Natural killer cell (primary cell): ENCODE measurements at regions of chr9 and their contacts with region 1.

Region 1: DNA sequence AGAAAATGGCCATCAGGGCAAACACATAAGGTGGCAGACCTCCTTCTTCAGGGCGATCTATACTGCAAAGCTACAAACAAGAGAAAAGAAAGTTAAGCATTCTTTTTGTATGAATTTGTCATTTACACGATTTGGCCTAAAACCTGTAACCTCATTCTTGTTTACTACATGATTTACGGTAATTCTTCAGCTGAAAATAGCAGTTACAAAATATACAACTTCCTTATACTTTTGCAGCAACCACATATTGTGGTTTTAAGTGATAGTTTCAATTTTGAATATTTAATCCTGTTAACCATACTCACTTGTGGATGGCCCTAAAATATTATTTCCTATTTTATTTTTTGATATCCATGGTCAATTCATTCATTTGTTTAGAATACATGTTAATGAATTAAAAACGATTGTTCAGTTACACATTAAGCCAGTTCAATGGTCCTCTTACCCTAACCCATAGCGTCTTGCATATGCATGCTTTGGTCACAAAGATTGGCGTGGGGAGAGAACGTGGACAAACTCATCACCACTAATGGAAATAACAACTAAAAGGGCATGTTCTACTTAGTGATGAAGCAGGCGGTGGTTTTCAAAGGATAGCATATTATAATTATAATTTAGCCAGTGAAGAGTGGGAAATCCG is 16.6 kb downstream of the TUT7 start:
- DNase-seq: peak in 1 of 2 donors; percentile 52
- ATAC-seq: peak; percentile 75 to 90 (median 81)
- H3K4me3 ChIP-seq: peak overlapping the region; percentile 33
- H3K4me3 Mint-ChIP-seq: peak overlapping the region; percentile 88
- H3K27ac ChIP-seq: peak overlapping the region; percentile 90
- H3K27ac Mint-ChIP-seq: peak overlapping the region; percentile 94
- H3K4me1 ChIP-seq: peaks cover 13% of the 10 kb centered on the region
- H3K4me1 Mint-ChIP-seq: peaks cover 31 to 35% of the 10 kb centered on the region in 2 donors
- H3K27me3 ChIP-seq: no peaks in the 10 kb centered on the region
- H3K27me3 Mint-ChIP-seq: no peaks in the 10 kb centered on the region
- CTCF ChIP-seq: no peak

Region 2: DNA sequence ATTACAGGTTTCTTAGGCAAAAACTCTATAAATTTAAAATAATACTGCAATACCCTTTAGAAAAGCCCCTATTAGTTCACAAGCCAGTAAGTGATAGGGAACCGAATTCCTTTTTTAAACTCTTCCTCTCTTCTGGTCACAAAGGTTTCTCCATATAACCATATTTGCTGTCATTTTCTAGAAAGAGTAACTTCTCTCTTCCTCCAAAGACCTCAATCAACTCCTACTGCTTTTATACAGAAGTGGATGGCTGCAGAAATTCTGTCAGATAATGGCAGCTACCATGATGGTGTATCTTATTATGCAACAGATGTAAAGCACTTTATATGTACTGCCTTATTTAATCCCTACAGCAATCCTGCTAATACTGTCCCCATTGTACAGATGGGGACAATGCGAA is 10.4 kb after region 1 on chr9:
- intact Hi-C with region 1: loop called (anchors 1 kb)
- DNase-seq: no peak
- ATAC-seq: no peak
- H3K4me3 ChIP-seq: no peak overlapping the region
- H3K4me3 Mint-ChIP-seq: peak overlapping the region; percentile 64
- H3K27ac ChIP-seq: no peak overlapping the region
- H3K27ac Mint-ChIP-seq: peak overlapping the region; percentile 93 to 97
- H3K4me1 ChIP-seq: peaks cover 19% of the 10 kb centered on the region
- H3K4me1 Mint-ChIP-seq: peaks cover 66 to 67% of the 10 kb centered on the region in 2 donors
- H3K27me3 ChIP-seq: no peaks in the 10 kb centered on the region
- H3K27me3 Mint-ChIP-seq: no peaks in the 10 kb centered on the region
- CTCF ChIP-seq: no peak

Region 3: GRCh38 chr9:86354011-86354817 is 16.6 kb after region 1 on chr9 and contains the start of gene TUT7:
- intact Hi-C with region 1: loop called (anchors 1 kb)
- DNase-seq: peak; percentile 96 to 97
- ATAC-seq: peak; percentile 92 to 99 (median 96)
- H3K4me3 ChIP-seq: peak within 1 kb of the TSS; percentile 72
- H3K4me3 Mint-ChIP-seq: peak within 1 kb of the TSS; percentile 95
- H3K27ac ChIP-seq: peak within 1 kb of the TSS; percentile 82
- H3K27ac Mint-ChIP-seq: peak within 1 kb of the TSS; percentile 93 to 97
- H3K4me1 ChIP-seq: peaks cover 19% of the 10 kb centered on the region
- H3K4me1 Mint-ChIP-seq: peaks cover 40 to 45% of the 10 kb centered on the region in 2 donors
- H3K27me3 ChIP-seq: no peaks in the 10 kb centered on the region
- H3K27me3 Mint-ChIP-seq: no peaks in the 10 kb centered on the region
- CTCF ChIP-seq: no peak
- total RNA-seq, gene TUT7: 84.7 to 94.8 (median 85.6) TPM

Region 4: DNA sequence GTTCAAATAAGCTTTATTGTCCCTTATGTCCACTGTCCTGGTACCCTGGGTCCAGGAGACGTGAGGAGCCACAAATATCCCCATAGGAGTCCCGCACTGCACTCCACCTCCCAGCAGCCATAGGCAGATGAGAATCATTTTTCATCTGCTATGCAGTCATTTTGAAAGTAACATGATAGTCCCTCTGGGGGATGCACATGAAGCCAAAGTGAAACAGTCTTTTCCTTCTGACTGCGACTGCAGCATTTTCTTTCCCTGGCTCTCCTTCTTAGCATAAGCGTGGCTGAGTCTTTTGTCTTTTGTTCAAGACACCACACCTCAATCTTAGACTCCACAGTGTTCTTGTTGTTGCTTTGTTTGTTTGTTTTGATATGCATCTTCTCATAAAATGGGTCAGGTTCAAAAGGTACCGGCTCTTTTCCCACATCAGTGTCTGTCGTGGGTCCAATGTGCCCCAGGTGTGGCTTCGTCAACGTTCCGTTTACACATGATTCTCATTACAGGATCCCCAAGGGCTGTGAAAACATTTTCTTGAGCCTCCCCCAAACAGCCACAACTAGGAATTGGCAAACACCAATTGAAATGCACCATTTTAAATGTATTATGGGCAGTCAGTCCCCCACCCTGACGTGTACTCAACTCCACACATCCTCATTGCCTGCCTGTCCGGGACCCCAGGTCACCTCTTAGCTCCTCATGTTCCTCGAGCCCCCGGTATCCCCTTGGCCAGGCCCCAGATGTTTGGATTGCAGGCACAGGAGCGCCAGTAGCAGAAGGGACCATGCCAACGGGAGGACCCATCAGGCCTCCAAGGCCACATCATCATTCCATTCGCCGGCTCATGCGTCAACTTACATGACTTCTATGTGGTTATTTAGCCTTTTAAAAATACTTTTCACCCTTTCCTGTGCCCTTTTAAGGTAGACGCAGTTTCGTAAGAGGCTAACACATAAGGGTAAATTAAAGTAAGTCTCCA is 922.2 kb after region 1 on chr9:
- intact Hi-C with region 1: no loop called
- DNase-seq: no peak
- ATAC-seq: no peak
- H3K4me3 ChIP-seq: no peak overlapping the region
- H3K4me3 Mint-ChIP-seq: no peak overlapping the region
- H3K27ac ChIP-seq: no peak overlapping the region
- H3K27ac Mint-ChIP-seq: no peak overlapping the region
- H3K4me1 ChIP-seq: no peaks in the 10 kb centered on the region
- H3K4me1 Mint-ChIP-seq: no peaks in the 10 kb centered on the region
- H3K27me3 ChIP-seq: no peaks in the 10 kb centered on the region
- H3K27me3 Mint-ChIP-seq: peaks cover 16 to 23% of the 10 kb centered on the region in 2 donors
- CTCF ChIP-seq: no peak